GM18951 (cell line): ENCODE measurements at regions of chrX and their contacts with region 1.

Region 1: DNA sequence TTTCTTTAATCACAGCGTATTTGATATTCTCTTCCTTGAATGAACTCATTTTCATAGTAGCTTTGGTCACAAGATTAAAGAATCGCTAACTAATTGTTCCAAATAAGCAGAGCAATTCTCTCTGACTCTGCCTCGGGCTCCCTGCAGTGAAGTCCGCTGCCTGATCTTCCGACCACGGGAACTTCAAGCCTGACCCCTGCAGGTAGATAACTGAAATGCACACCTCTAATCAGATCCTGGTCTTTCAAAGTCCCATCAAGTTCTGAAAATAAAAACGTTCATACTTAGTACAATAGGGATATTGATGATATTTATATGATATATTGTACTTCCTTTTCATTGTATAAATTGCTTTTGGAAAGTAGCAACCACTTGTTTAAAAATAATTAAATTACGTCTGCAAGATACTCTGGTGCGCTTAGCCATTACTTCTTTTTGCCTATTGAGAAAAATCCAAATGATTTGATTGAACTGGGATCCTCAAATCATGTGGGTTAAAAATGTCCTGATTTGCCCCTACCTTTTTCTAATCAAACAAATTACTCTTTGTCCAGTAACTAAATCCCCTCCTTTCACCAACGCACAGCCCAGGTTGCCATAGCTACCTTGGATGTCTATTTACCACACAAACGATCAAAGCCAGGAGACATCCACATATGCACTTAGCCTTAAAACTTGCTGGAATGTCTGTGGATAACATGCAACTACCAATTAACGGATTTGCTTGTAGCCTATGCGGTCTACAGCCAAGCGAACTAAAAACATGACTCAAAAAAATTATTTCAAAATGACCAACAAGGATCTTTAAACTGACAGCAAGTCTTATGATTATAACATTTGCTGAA is 4.2 kb downstream of the MID1 start:
- POLR2A ChIP-seq: no peak

Region 2: DNA sequence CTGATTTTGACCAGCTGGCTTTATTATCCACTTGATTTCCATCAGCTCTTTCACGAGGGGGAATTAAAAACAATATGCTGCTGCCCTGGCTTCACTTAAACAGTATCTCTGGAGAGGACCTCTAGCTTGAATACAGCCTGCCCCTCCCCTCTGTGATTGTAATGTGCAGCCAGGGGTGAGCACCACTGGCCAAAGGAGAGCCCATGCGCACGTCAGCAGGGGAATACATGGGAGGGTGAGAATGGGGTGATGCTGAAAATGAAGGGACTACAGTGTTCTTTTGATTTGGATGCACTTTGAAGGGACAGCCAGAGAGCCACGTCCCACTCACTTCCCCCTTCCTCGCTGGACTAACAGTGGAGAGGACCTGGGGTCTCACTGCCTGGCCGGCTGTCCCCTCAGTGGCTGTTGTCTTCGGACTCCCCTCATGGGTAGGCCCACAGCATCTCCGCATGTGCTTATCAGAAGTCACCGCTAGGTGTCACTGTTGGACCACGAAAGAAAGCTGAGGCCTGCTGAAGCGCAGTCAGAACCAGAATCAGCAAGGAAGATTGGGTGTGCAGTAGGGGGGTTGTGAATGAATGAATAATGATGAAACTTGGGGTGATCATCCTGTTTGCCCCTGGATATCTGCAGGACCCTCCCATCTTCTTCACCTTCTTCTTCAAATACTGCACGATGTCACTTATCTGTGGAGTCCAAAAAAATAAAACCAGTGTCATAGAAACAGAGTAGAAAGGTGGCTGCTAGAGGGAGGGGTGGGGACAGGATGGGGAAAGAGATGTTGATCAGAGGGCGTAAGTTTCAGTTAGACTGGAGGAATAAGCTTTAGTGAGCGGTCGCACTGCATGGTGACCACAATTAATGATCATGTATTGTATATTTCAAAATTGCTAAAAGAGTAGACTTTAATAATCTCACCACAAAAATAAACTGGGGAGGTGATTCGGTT is 426.6 kb before region 1 on chrX:
- in situ Hi-C with region 1: loop called (anchors 25 kb)
- POLR2A ChIP-seq: no peak

Region 3: GRCh38 chrX:11953615-11954014 is 1337.5 kb after region 1 on chrX:
- in situ Hi-C with region 1: loop called (anchors 25 kb)
- POLR2A ChIP-seq: no peak